WTC11 (cell line): ENCODE measurements at regions of chr1 and their contacts with region 1.

Region 1: GRCh38 chr1:220113136-220113695 is 19.3 kb downstream of the IARS2 start:
- DNase-seq: no peak
- ATAC-seq: peak; percentile 66
- H3K4me3 Mint-ChIP-seq: no peak overlapping the region
- H3K27ac Mint-ChIP-seq: no peak overlapping the region
- H3K4me1 Mint-ChIP-seq: no peaks in the 10 kb centered on the region
- H3K27me3 Mint-ChIP-seq: no peaks in the 10 kb centered on the region
- CTCF ChIP-seq: peak; percentile 33

Region 2: DNA sequence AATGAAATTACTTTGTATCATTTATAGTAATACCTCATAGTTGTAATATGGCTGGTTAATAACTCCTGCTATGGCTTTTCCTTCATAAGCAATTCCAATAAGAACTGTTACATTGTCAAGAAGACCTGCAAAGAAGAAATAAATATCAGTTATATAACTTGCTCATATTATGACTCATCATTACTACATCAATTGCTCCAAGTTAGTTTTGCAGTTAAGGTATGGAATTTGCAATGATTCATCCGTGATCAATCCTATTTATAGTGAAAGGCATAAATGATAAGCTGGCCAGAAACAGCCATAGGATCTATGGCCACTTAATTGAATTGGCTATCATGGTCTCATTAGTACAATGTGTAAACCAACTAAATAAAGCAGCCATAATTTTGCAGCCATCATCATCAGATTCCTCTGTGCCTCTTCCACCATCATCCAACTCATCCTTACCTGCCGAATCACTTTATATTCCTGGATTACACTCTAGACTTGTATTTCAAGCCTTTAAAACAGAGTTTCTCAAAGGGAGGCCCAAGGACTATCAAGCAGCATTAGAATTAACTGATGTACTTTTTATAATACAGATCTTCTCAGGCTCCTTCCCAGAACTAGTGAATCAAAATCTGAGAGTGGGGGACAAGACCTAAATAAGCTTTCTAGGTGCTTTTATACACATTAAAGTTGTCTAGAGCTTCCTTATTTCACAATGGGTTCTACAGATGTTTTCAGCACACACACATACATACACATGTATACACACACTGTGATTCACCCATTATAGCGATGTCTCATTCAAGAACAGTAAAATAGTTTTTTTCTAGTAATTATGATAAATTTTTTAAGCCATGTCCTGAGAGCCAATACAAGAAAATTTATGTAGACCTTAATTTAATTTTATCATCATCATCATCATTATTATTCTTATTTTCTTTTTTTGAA is 45.7 kb before region 1 on chr1:
- CTCF ChIA-PET with region 1: no interaction called
- POLR2A ChIA-PET with region 1: no interaction called
- DNase-seq: no peak
- ATAC-seq: no peak
- H3K4me3 Mint-ChIP-seq: no peak overlapping the region
- H3K27ac Mint-ChIP-seq: no peak overlapping the region
- H3K4me1 Mint-ChIP-seq: no peaks in the 10 kb centered on the region
- H3K27me3 Mint-ChIP-seq: no peaks in the 10 kb centered on the region
- CTCF ChIP-seq: no peak

Region 3: GRCh38 chr1:220089650-220090556 is 23.3 kb before region 1 on chr1 and contains the start of gene BPNT1:
- CTCF ChIA-PET with region 1: interaction called, 11 read pairs
- POLR2A ChIA-PET with region 1: no interaction called
- DNase-seq: peak; percentile 98
- ATAC-seq: peak; percentile 56
- H3K4me3 Mint-ChIP-seq: peak within 1 kb of the TSS; percentile 87
- H3K27ac Mint-ChIP-seq: 0 out of 2 replicates have a peak within 1 kb of the TSS, but pooled peaks have one; percentile 3
- H3K4me1 Mint-ChIP-seq: 0 out of 2 replicates have a peak, but pooled peaks cover 2% of the 10 kb centered on the region
- H3K27me3 Mint-ChIP-seq: no peaks in the 10 kb centered on the region
- CTCF ChIP-seq: no peak
- total RNA-seq, gene BPNT1: 12.8 to 14.4 TPM (median 13.7 TPM) in 3 replicates

Region 4: GRCh38 chr1:220123889-220124288 is 10.7 kb after region 1 on chr1:
- CTCF ChIA-PET with region 1: interaction called, 29 read pairs
- POLR2A ChIA-PET with region 1: no interaction called
- DNase-seq: peak; percentile 26
- ATAC-seq: no peak
- H3K4me3 Mint-ChIP-seq: no peak overlapping the region
- H3K27ac Mint-ChIP-seq: no peak overlapping the region
- H3K4me1 Mint-ChIP-seq: 0 out of 2 replicates have a peak, but pooled peaks cover 5% of the 10 kb centered on the region
- H3K27me3 Mint-ChIP-seq: no peaks in the 10 kb centered on the region
- CTCF ChIP-seq: no peak

Region 5: GRCh38 chr1:220241072-220241663 is 128.0 kb after region 1 on chr1:
- CTCF ChIA-PET with region 1: no interaction called
- POLR2A ChIA-PET with region 1: no interaction called
- DNase-seq: no peak
- ATAC-seq: no peak
- H3K4me3 Mint-ChIP-seq: no peak overlapping the region
- H3K27ac Mint-ChIP-seq: no peak overlapping the region
- H3K4me1 Mint-ChIP-seq: peaks cover 46% of the 10 kb centered on the region
- H3K27me3 Mint-ChIP-seq: no peaks in the 10 kb centered on the region
- CTCF ChIP-seq: no peak

Region 6: DNA sequence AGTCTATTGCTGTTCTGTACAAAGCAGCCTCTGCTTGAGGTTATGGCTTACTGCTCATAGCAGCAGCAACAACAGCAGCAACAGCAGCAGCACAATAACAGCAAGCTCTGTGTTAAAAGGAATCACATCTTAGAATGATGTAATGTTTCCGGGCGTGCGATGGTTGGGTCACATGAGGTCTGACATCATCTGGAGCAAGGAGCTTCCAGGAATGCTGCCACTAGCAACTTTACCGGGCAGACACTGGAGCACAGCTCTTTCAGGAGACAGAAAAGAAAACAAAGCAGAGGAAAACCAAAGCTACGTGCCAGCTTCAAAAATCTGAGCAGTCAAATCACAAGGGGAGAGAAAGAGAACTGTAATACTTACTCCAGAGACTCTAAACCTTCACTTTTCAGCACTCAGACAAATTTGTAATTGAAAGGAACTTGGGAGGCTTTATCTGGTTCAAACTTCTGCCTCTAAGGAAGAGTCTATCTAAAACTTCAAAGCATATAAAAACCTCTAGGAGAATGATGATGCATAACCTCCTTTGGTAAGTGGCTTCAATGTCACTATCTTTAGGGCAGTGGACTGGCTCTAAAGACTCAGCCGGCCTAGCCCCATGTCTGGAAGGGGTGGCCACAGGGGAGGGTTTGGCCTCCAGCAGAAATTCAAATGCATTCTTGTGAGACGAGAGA is 187.4 kb after region 1 on chr1:
- CTCF ChIA-PET with region 1: no interaction called
- POLR2A ChIA-PET with region 1: no interaction called
- DNase-seq: no peak
- ATAC-seq: peak; percentile 50
- H3K4me3 Mint-ChIP-seq: no peak overlapping the region
- H3K27ac Mint-ChIP-seq: peak overlapping the region; percentile 89
- H3K4me1 Mint-ChIP-seq: peaks cover 27% of the 10 kb centered on the region
- H3K27me3 Mint-ChIP-seq: no peaks in the 10 kb centered on the region
- CTCF ChIP-seq: no peak